WTC11 (cell line): ENCODE measurements at regions of chr2 and their contacts with region 1.

Region 1: GRCh38 chr2:219402665-219403515 is 15.2 kb upstream of the DNPEP start:
- DNase-seq: peak; percentile 76
- ATAC-seq: peak; percentile 70
- H3K4me3 Mint-ChIP-seq: no peak overlapping the region
- H3K27ac Mint-ChIP-seq: no peak overlapping the region
- H3K4me1 Mint-ChIP-seq: peaks cover 46% of the 10 kb centered on the region
- H3K27me3 Mint-ChIP-seq: no peaks in the 10 kb centered on the region; the same call in 1 of the 2 replicates
- CTCF ChIP-seq: peak; percentile 83; the same call in 1 of the 2 replicates

Region 2: DNA sequence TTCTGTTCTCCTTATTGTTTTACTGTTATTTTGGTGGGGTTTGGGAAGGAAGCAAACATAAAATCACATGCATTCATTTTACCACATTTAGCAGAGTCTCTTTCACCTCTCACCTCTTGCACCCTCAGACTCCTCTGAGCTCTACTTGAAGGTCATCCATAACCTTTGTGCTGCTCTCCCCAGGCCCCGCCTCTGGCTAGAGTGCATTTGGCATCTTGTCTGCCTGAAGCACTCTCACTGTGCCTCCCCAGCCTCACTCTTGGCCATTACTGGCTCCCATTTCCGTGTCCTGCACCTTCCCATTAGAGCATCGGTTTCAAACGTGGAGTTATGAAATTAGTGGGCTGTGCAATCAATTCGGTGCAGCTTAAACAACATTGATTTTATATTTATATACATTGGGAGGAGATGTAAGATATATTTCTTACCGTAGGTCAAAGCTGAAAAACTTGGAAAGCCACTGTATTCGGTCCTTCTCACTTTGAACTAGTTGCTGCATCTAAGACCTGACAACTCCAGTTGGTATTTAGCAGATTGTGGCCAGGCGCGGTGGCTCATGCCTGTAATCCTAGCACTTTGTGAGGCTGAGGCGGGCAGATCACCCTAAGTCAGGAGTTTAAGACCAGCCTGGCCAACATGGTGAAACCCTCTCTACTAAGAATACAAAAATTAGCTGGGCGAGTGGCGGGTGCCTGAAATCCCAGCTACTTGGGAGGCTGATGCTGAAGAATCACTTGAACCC is 203.2 kb before region 1 on chr2:
- CTCF ChIA-PET with region 1: no interaction called
- POLR2A ChIA-PET with region 1: no interaction called
- DNase-seq: no peak
- ATAC-seq: no peak
- H3K4me3 Mint-ChIP-seq: no peak overlapping the region
- H3K27ac Mint-ChIP-seq: no peak overlapping the region
- H3K4me1 Mint-ChIP-seq: peaks cover 8% of the 10 kb centered on the region
- H3K27me3 Mint-ChIP-seq: peaks cover 11% of the 10 kb centered on the region
- CTCF ChIP-seq: no peak

Region 3: GRCh38 chr2:219331560-219332213 is 71.2 kb before region 1 on chr2:
- CTCF ChIA-PET with region 1: no interaction called
- POLR2A ChIA-PET with region 1: no interaction called
- DNase-seq: peak; percentile 69
- ATAC-seq: peak; percentile 78
- H3K4me3 Mint-ChIP-seq: peak overlapping the region; percentile 54
- H3K27ac Mint-ChIP-seq: no peak overlapping the region
- H3K4me1 Mint-ChIP-seq: peaks cover 11% of the 10 kb centered on the region
- H3K27me3 Mint-ChIP-seq: peaks cover 94% of the 10 kb centered on the region
- CTCF ChIP-seq: no peak

Region 4: GRCh38 chr2:219388127-219388844 is 14.6 kb before region 1 on chr2:
- CTCF ChIA-PET with region 1: interaction called, 64 read pairs
- POLR2A ChIA-PET with region 1: interaction called, 5 read pairs
- DNase-seq: peak; percentile 97
- ATAC-seq: peak; percentile 76
- H3K4me3 Mint-ChIP-seq: peak overlapping the region; percentile 76
- H3K27ac Mint-ChIP-seq: no peak overlapping the region; the same call in 1 of the 2 replicates
- H3K4me1 Mint-ChIP-seq: peaks cover 7% of the 10 kb centered on the region
- H3K27me3 Mint-ChIP-seq: 0 out of 2 replicates have a peak, but pooled peaks cover 3% of the 10 kb centered on the region
- CTCF ChIP-seq: no peak

Region 5: GRCh38 chr2:219441451-219442255 is 38.8 kb after region 1 on chr2:
- CTCF ChIA-PET with region 1: interaction called, 119 read pairs
- POLR2A ChIA-PET with region 1: no interaction called
- DNase-seq: peak; percentile 62
- ATAC-seq: peak; percentile 60
- H3K4me3 Mint-ChIP-seq: peak overlapping the region; percentile 82
- H3K27ac Mint-ChIP-seq: no peak overlapping the region
- H3K4me1 Mint-ChIP-seq: peaks cover 27% of the 10 kb centered on the region
- H3K27me3 Mint-ChIP-seq: peaks cover 22% of the 10 kb centered on the region
- CTCF ChIP-seq: no peak

Region 6: GRCh38 chr2:219475697-219476651 is 73.1 kb after region 1 on chr2:
- CTCF ChIA-PET with region 1: interaction called, 16 read pairs
- POLR2A ChIA-PET with region 1: no interaction called
- DNase-seq: peak; percentile 86
- ATAC-seq: peak; percentile 48
- H3K4me3 Mint-ChIP-seq: peak overlapping the region; percentile 68
- H3K27ac Mint-ChIP-seq: peak overlapping the region; percentile 81; the same call in 1 of the 2 replicates
- H3K4me1 Mint-ChIP-seq: peaks cover 24% of the 10 kb centered on the region
- H3K27me3 Mint-ChIP-seq: no peaks in the 10 kb centered on the region; the same call in 1 of the 2 replicates
- CTCF ChIP-seq: peak; percentile 91

Region 7: GRCh38 chr2:219498280-219499057 is 95.6 kb after region 1 on chr2 and contains the start of gene GMPPA:
- CTCF ChIA-PET with region 1: interaction called, 74 read pairs
- POLR2A ChIA-PET with region 1: interaction called, 7 read pairs
- DNase-seq: peak; percentile 98
- ATAC-seq: peak; percentile 84
- H3K4me3 Mint-ChIP-seq: peak within 1 kb of the TSS; percentile 98
- H3K27ac Mint-ChIP-seq: peak within 1 kb of the TSS; percentile 99
- H3K4me1 Mint-ChIP-seq: peaks cover 52% of the 10 kb centered on the region
- H3K27me3 Mint-ChIP-seq: peaks cover 45% of the 10 kb centered on the region
- CTCF ChIP-seq: no peak
- total RNA-seq, gene GMPPA: 44.2 to 51.9 TPM (median 49.5 TPM) in 3 replicates

Region 8: DNA sequence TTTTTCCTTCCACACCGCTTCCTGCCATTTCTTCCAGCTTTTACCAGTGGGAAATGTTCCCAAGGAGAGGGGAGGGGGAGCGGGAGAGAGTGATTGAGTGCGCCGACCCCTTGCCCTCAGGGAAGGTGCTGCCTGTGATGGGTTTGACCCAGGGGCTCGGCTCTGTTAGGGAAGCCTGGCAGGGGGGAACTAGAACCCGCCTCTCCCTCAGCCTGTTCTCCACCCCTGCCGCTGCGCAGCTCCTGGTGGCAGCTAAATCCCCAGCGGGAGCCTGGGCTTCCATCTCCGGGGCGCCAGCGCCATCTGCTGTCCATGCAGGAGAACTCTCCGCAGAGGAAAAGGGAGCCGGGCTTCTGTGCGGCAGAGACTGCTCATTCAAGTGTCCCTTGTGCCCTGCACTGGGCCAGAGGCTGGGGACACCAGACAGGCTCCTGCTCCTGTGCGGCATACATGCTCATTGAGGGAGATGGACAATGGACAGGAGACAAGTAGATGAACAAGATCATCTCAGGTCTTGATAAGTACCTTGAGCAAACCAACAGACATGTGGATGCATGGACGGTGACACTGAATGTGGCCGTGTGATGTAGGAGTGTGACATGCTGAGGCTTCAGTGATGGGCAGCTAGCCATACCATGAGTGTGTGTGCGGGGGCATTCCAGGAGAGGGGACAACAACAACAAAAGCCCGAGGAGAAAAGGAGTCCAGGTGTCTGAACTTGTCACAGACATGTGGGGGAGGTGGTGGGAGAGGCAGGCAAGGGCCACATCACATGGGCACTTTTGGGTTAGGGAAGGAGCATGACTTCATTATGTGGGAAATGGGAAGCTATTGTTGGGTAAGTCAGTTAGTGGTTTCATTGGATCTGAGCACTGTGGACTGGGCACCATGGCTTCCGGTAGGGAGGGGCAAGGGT is 127.4 kb after region 1 on chr2:
- CTCF ChIA-PET with region 1: interaction called, 178 read pairs
- POLR2A ChIA-PET with region 1: no interaction called
- DNase-seq: peak; percentile 92
- ATAC-seq: peak; percentile 75
- H3K4me3 Mint-ChIP-seq: peak overlapping the region; percentile 60
- H3K27ac Mint-ChIP-seq: no peak overlapping the region
- H3K4me1 Mint-ChIP-seq: peaks cover 30% of the 10 kb centered on the region
- H3K27me3 Mint-ChIP-seq: peaks cover 56% of the 10 kb centered on the region
- CTCF ChIP-seq: peak; percentile 88